Activated T-helper 2 cell treated with anti-CD3 and anti-CD28 coated beads, Interferon-gamma antibody, Interleukin-2, Interleukin-4, amounts not matched to agents 10 μg/mL and 5 μg/mL and 100 μg/mL, durations not matched to agents 14 hours and 24 hours and 36 hours (primary cell): ENCODE measurements at regions of chr2 and their contacts with region 1.

Region 1: DNA sequence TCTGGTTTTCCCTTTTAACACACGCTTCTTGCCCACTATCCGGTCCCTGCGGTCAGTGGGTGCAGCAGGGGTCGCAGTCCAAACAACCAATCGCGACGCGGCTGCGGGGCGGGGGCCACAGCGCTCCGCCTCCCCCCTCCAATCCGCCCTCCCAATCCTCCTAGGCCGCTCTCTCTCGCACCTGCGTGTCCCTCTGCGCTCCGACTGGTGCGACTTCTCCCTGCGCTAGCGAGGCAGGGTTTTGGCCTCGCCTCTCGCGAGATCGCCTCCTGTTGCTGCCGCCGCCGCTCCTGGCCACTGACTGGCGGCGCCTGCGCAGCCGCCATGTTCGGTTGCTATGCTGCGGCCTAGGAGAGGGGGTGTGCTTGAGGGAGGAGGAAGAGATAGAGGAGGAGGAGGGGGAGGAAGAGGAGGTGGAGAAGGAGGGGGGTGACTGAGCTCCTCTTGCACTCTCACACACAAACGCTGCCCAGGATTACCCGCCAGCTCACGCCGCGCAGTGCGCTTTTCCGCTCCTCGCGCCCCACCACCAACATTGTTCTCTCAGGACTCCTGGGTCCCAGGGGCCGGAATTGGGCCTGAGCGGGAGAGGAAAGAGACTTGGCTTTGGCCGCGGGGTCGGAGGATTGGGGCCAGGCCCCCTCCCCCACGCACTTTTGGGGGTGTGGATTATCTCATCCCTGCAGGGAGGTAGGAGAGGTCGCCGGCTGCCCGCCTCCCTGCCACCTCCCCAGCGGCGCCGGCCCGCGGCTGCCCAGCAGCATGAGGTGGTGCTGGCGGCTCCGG is at the start of gene PTPN4:
- DNase-seq: peak; percentile 96
- H3K4me3 Mint-ChIP-seq: peak within 1 kb of the TSS; percentile 89
- H3K27ac Mint-ChIP-seq: peak within 1 kb of the TSS; percentile 78
- H3K4me1 Mint-ChIP-seq: peaks cover 42% of the 10 kb centered on the region
- H3K27me3 Mint-ChIP-seq: no peaks in the 10 kb centered on the region
- total RNA-seq, gene PTPN4: 22.1 and 22.5 TPM in 2 replicates

Region 2: GRCh38 chr2:119668546-119668945 is 91.1 kb before region 1 on chr2:
- intact Hi-C with region 1: no loop called
- DNase-seq: no peak
- H3K4me3 Mint-ChIP-seq: no peak overlapping the region
- H3K27ac Mint-ChIP-seq: no peak overlapping the region
- H3K4me1 Mint-ChIP-seq: peaks cover 5% of the 10 kb centered on the region
- H3K27me3 Mint-ChIP-seq: peaks cover 14% of the 10 kb centered on the region

Region 3: DNA sequence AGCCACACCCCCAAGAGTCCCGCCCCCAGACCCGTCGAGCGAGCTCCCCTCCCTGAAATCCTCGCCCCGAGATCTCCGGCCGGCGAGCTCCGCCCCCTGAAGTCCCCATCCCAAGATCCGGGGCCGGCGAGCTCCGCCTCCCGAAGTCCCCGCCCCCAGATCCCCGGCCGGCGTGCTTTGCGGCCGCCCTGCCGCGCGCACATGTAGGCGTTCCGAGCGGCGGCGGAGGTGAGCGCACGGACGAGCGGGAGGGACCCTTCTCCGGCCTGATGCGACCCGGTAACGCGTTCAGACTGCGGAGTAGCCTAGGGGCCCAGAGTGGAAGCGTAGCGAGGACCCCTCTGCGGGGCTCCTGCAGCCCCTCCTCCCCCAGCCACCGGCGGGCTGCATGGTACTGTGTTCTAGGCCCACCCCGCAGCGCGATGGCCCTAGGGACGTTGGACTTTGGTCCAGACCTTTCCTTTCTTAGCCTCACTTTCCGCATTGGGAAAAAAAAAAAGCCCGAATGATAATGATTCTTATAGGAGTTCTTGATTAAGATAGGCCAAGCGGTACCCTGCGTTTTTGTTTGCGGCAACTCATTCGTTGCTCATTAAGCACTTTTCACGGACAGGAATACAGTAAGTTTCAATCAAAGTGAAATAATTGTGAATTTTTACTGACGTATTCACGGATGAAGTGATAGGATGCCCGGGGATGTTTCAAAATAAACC is 80.5 kb before region 1 on chr2 and contains the start of gene TMEM177:
- intact Hi-C with region 1: loop called (anchors 1 kb)
- DNase-seq: peak; percentile 89
- H3K4me3 Mint-ChIP-seq: peak within 1 kb of the TSS; percentile 88
- H3K27ac Mint-ChIP-seq: peak within 1 kb of the TSS; percentile 79
- H3K4me1 Mint-ChIP-seq: peaks cover 18% of the 10 kb centered on the region
- H3K27me3 Mint-ChIP-seq: peaks cover 3% of the 10 kb centered on the region
- total RNA-seq, gene TMEM177: 16.9 and 17.0 TPM in 2 replicates

Region 4: DNA sequence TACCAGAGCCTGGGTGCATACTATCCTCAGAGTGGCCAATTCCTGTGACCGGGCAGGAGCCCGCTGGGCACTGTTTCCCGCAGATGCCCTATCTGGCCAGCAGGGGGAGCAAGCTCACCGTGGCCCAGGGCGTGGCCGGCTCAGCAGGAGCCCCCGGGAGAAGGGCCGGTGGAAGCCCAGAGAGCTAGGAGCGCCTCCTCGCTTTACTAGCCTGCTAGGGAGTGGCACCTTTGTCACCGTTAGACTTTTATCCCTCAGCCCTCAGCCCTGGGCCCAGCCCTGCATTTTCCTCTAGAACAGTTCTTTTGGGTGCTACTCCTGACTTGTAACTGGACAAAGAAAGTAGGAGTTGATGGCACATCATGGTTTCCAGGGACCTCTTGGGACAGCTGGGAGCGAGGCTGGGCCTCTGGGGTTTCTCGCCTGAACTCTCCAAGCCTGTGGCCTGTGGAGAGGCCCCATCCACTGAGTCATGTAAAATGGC is 56.7 kb before region 1 on chr2:
- intact Hi-C with region 1: loop called (anchors 5 kb)
- DNase-seq: peak; percentile 52
- H3K4me3 Mint-ChIP-seq: no peak overlapping the region
- H3K27ac Mint-ChIP-seq: no peak overlapping the region
- H3K4me1 Mint-ChIP-seq: peaks cover 4% of the 10 kb centered on the region
- H3K27me3 Mint-ChIP-seq: peaks cover 4% of the 10 kb centered on the region

Region 5: GRCh38 chr2:119862127-119862889 is 102.7 kb after region 1 on chr2:
- intact Hi-C with region 1: loop called (anchors 1 kb)
- DNase-seq: no peak
- H3K4me3 Mint-ChIP-seq: peak overlapping the region; percentile 37
- H3K27ac Mint-ChIP-seq: peak overlapping the region; percentile 63
- H3K4me1 Mint-ChIP-seq: peaks cover 60% of the 10 kb centered on the region
- H3K27me3 Mint-ChIP-seq: no peaks in the 10 kb centered on the region

Region 6: DNA sequence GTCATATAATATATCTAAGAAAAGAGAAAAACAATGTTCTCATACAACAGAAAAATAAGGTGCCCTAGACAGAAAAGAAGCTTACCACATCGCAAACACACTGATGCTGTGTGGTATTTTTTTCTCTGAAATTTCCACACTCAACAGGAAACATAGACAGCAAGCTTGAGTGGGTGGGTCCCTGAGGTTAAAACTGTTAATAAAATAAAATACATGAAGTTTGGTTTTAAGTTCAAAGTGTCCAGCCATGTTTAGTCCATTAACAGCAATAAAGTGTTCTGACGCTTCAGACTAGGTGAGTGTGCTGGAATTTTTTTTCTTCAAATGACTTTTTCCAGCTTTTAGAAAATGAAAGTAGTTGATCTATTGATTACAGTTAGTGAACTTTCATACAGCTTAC is 169.9 kb after region 1 on chr2:
- intact Hi-C with region 1: loop called (anchors 5 kb)
- DNase-seq: peak; percentile 18
- H3K4me3 Mint-ChIP-seq: peak overlapping the region; percentile 72
- H3K27ac Mint-ChIP-seq: peak overlapping the region; percentile 73
- H3K4me1 Mint-ChIP-seq: peaks cover 59% of the 10 kb centered on the region
- H3K27me3 Mint-ChIP-seq: no peaks in the 10 kb centered on the region

Region 7: DNA sequence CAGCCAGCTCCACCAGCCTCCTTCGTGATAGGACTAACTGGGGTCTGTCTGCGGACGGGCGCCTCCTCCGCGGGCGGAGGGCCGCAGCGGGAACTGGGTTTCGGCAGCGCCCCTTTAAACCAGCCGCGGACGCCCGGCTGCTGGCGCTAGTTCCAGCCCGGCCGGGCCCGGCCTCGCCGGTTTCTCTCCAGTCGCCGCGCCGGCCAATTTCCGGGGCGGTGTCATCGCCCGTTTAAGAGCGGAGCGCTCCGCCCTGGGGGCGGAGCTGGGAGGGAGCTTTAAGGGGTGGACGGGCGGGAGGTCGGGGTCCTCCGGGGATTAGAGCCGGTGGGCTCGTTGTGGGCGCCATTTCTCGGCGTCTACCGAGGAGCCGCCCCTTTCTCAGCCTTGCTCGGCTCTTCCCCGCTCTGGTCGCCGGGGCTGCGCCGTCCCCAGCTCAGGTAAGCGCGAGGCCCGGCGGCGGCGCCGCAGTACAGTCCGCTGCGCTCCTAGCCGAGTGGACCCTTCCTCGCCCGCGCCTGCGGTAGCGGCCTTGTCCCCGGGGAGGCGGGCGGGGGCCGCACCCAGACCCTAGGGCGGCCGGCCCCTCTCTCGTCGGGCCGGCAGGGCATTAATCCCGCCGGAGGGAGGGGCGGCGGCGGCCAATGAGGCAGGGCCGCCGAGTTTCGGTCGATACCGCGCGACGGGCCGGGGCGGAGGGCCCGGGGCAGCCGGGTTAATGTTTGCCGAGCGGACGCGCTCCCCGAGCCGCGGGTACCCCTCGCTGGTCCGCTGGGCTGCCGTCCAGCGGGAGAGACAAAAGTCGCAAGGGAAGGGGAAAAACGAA is 253.3 kb after region 1 on chr2 and contains the start of gene EPB41L5:
- intact Hi-C with region 1: loop called (anchors 2 kb)
- DNase-seq: peak; percentile 72
- H3K4me3 Mint-ChIP-seq: peak within 1 kb of the TSS; percentile 67
- H3K27ac Mint-ChIP-seq: no peak within 1 kb of the TSS
- H3K4me1 Mint-ChIP-seq: peaks cover 10% of the 10 kb centered on the region
- H3K27me3 Mint-ChIP-seq: peaks cover 27% of the 10 kb centered on the region
- total RNA-seq, gene EPB41L5: 0.94 and 1.5 TPM in 2 replicates

Region 8: DNA sequence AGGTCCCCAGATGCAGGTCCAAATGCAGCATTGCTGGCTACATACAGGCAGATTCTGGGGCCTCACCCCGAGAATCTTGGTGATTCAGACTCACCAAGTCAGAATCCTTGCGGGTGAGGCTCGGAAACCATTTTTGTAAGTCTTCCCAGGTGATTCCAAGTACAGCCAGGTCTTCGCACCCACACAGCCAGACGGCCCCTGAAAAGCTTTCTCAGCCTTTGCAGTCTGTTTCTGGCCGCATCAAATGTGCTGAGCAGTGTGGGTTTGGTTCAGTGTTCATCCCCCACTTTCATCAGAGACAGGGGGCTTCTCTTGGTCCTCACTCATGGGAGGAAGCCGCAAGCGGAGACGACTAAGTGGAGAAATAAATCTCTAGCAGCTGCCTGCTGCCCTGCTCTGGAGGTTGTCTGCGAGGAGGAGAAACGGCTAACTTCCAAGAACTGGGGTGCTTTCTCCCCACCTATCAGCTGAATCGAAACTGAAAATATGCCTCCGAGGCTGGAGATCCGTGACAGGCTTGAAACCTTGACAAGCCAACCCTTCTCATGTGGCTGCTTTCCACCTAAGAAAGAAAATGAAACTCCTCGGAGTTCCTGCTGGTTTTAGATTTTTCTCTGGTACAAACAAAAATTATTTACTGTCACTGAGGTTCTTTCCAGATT is 472.5 kb after region 1 on chr2:
- intact Hi-C with region 1: loop called (anchors 5 kb)
- DNase-seq: peak; percentile 79
- H3K4me3 Mint-ChIP-seq: peak overlapping the region; percentile 91
- H3K27ac Mint-ChIP-seq: peak overlapping the region; percentile 98
- H3K4me1 Mint-ChIP-seq: peaks cover 58% of the 10 kb centered on the region
- H3K27me3 Mint-ChIP-seq: no peaks in the 10 kb centered on the region

Region 9: GRCh38 chr2:120576509-120577474 is 817.1 kb after region 1 on chr2:
- intact Hi-C with region 1: no loop called
- DNase-seq: no peak
- H3K4me3 Mint-ChIP-seq: no peak overlapping the region
- H3K27ac Mint-ChIP-seq: no peak overlapping the region
- H3K4me1 Mint-ChIP-seq: no peaks in the 10 kb centered on the region
- H3K27me3 Mint-ChIP-seq: peaks cover 18% of the 10 kb centered on the region